ENCODE measurements at regions of chr5 and their contacts with region 1.

Region 1: GRCh38 chr5:160021831-160022446 is 13.0 kb downstream of the TTC1 start:
- DNase-seq: peak; percentile 37
- H3K4me3 Mint-ChIP-seq: no peak overlapping the region
- H3K27ac Mint-ChIP-seq: no peak overlapping the region
- H3K4me1 Mint-ChIP-seq: peaks cover 19% of the 10 kb centered on the region
- H3K27me3 Mint-ChIP-seq: no peaks in the 10 kb centered on the region

Region 2: DNA sequence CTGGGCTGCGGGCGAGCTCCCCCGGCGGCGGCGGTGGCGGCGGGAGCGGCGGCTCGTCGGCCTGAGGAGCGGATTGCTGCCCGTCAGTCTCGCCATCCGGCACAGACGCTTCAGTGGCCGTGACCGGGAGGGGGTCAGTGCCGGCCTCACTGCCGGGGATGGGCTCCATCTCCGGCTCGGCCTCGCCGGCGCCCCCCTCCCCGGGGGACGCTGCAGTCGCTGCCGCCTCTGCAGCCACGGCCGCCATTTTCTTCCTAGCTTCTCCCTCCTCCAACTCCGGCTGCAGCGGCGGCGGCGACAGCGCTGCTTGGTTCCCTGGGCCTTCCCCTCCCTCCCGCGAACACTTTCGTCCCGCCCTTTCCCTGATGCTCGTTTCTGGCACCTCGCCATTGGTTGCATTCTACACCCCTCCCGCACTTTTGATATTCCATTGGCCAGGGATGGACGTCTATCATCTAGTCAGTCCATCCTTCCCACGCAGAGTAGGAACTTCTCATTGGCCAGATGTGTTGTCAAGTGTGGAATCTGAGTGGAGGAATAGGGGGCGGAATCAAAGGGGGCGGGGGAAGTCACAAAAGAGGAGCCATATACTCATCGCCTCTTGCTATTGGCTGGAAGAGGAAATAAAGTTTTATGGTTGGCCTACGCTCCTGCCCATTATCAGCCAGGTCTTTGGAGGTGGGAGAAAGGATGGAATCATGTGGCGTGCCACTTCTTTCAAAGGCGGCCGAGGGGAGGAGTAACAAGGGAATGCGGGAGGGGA is 97.4 kb after region 1 on chr5 and contains the start of gene PWWP2A:
- intact Hi-C with region 1: loop called (anchors 1 kb)
- DNase-seq: peak; percentile 96
- H3K4me3 Mint-ChIP-seq: peak within 1 kb of the TSS; percentile 95
- H3K27ac Mint-ChIP-seq: peak within 1 kb of the TSS; percentile 96
- H3K4me1 Mint-ChIP-seq: peaks cover 15% of the 10 kb centered on the region
- H3K27me3 Mint-ChIP-seq: peaks cover 4% of the 10 kb centered on the region
- total RNA-seq, gene PWWP2A: 29.7 and 30.2 TPM in 2 replicates

Region 3: DNA sequence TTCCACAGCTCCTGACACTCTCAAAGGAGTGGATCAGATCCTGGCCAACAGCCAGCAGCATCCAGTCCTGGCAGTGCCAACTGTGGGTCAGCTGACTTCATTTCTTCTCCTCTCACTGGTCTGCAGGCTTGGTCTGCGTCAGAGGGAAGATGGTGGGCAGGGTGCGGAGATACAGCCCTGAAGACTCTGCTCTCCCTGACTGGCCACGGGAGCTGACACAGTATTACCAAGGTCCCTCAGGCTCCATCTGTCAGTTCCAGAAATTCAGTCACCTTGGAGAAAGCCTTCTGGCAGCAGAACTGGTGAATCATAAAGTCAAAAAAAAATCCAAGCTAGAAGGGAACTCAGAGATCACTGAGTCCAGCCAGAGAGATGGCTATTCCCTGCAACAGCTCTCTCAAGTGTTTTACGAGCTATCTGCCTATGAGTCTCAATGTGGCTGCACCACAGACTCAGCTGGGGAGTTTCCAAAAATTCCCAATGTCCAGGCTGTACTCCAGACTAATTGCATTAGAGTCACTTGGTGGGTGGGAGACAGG is 320.5 kb after region 1 on chr5:
- intact Hi-C with region 1: loop called (anchors 1 kb)
- DNase-seq: no peak
- H3K4me3 Mint-ChIP-seq: no peak overlapping the region
- H3K27ac Mint-ChIP-seq: no peak overlapping the region
- H3K4me1 Mint-ChIP-seq: peaks cover 4% of the 10 kb centered on the region
- H3K27me3 Mint-ChIP-seq: peaks cover 9% of the 10 kb centered on the region

Region 4: GRCh38 chr5:160390787-160391696 is 369.1 kb after region 1 on chr5:
- intact Hi-C with region 1: loop called (anchors 1 kb)
- DNase-seq: no peak
- H3K4me3 Mint-ChIP-seq: no peak overlapping the region
- H3K27ac Mint-ChIP-seq: no peak overlapping the region
- H3K4me1 Mint-ChIP-seq: no peaks in the 10 kb centered on the region
- H3K27me3 Mint-ChIP-seq: peaks cover 4% of the 10 kb centered on the region

Measured in activated T-helper 1 cell treated with anti-CD3 and anti-CD28 coated beads, Interleukin-12 subunit alpha, Interleukin-12 subunit beta, Interleukin-2, Interleukin-4 antibody, amounts not matched to agents 30 ng/mL and 10 ng/mL and 1 ng/mL, durations not matched to agents 14 hours and 24 hours and 36 hours (primary cell).